CD8-positive, alpha-beta T cell (primary cell): ENCODE measurements at regions of chr17 and their contacts with region 1.

Region 1: GRCh38 chr17:30173649-30174048 is 57.0 kb downstream of the NSRP1 start:
- DNase-seq: peak in 1 of 9 experiments; percentile 13
- ATAC-seq: no peak
- H3K4me3 ChIP-seq: no peak overlapping the region
- H3K4me3 Mint-ChIP-seq: no peak overlapping the region
- H3K27ac ChIP-seq: no peak overlapping the region
- H3K27ac Mint-ChIP-seq: no peak overlapping the region
- H3K4me1 ChIP-seq: no peaks in the 10 kb centered on the region
- H3K4me1 Mint-ChIP-seq: peaks cover 5% of the 10 kb centered on the region
- H3K27me3 ChIP-seq: no peaks in the 10 kb centered on the region
- H3K27me3 Mint-ChIP-seq: no peaks in the 10 kb centered on the region
- CTCF ChIP-seq: no peak

Region 2: DNA sequence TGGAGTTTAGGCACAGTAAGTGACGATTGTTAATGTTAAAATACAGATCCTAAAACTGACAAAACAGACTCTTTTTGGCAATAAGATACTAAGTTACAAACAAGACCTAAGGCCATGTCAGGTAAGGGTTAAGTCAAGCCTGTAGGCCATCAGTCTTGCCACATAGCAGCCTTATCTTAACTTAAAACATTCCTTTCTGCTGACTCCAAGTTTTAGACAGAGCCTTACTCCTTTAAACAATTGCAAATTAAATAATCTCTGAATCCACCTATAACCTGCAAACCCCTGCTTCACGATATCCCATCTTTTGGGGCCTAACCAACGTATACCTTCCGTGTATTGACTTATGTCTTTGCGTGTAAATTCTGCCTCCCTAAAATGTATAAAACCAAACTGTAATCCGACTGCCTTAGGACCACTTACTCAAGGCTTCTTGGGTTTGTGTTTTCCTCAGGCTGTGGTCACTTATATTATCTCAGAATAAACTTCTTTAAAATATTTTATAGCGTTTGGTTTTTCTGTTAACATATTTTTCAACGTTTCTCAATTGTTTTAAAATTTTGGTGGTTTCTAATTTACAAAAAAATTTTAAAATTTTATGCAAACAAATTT is 167.8 kb before region 1 on chr17:
- CTCF ChIA-PET with region 1: no interaction called
- POLR2A ChIA-PET with region 1: no interaction called
- intact Hi-C with region 1: no loop called
- DNase-seq: no peak
- ATAC-seq: no peak
- H3K4me3 ChIP-seq: no peak overlapping the region
- H3K4me3 Mint-ChIP-seq: no peak overlapping the region
- H3K27ac ChIP-seq: no peak overlapping the region
- H3K27ac Mint-ChIP-seq: no peak overlapping the region
- H3K4me1 ChIP-seq: no peaks in the 10 kb centered on the region
- H3K4me1 Mint-ChIP-seq: peaks cover 2% of the 10 kb centered on the region
- H3K27me3 ChIP-seq: no peaks in the 10 kb centered on the region
- H3K27me3 Mint-ChIP-seq: no peaks in the 10 kb centered on the region
- CTCF ChIP-seq: no peak

Region 3: DNA sequence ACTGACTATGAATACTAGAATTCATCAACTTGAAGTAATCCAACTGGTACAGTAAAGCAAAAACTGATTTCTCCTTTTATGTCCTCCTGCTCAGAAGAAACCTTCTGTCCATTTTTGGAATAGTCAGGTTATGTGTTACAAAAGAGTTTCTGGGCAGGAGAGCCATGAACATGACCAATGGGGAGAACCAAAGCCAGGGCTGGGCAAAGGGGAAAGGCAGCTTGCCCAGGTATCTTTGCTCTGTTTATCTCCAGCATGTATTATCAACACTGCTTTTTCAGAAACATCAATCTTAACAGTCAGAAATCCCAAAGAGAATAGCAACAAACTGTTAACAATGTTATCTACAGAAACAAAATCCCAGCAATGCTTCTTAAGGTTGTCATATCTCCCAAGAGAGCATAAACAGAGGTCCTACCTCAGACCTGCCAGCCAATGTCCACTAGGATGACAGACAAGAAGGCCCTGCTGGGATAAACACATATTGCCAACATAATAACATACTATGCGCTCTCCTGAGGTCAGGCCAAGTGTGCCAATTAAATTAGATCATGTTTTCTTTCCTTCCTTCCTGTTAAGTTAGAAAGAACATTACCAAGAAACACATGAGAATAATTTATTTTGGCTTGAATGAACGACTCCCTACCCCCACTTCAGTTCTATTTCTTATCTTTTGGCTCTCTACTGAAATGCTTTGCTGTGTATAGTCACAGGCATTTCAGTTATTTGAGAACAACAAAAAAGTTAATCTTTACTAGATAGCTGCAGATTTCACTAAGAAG is 90.1 kb after region 1 on chr17:
- CTCF ChIA-PET with region 1: no interaction called
- POLR2A ChIA-PET with region 1: no interaction called
- intact Hi-C with region 1: loop called in 1 of 2 experiments (anchors 10 kb)
- DNase-seq: no peak
- ATAC-seq: no peak
- H3K4me3 ChIP-seq: no peak overlapping the region
- H3K4me3 Mint-ChIP-seq: no peak overlapping the region
- H3K27ac ChIP-seq: no peak overlapping the region
- H3K27ac Mint-ChIP-seq: no peak overlapping the region
- H3K4me1 ChIP-seq: no peaks in the 10 kb centered on the region
- H3K4me1 Mint-ChIP-seq: no peaks in the 10 kb centered on the region
- H3K27me3 ChIP-seq: no peaks in the 10 kb centered on the region
- H3K27me3 Mint-ChIP-seq: no peaks in the 10 kb centered on the region
- CTCF ChIP-seq: no peak

Region 4: GRCh38 chr17:30454635-30455034 is 281.0 kb after region 1 on chr17:
- CTCF ChIA-PET with region 1: no interaction called
- POLR2A ChIA-PET with region 1: no interaction called
- intact Hi-C with region 1: no loop called
- DNase-seq: no peak
- ATAC-seq: no peak
- H3K4me3 ChIP-seq: no peak overlapping the region
- H3K4me3 Mint-ChIP-seq: no peak overlapping the region
- H3K27ac ChIP-seq: no peak overlapping the region
- H3K27ac Mint-ChIP-seq: no peak overlapping the region
- H3K4me1 ChIP-seq: no peaks in the 10 kb centered on the region
- H3K4me1 Mint-ChIP-seq: no peaks in the 10 kb centered on the region
- H3K27me3 ChIP-seq: no peaks in the 10 kb centered on the region
- H3K27me3 Mint-ChIP-seq: no peaks in the 10 kb centered on the region
- CTCF ChIP-seq: no peak